HepG2 (cell line): ENCODE measurements at regions of chr7 and their contacts with region 1.

Region 1: DNA sequence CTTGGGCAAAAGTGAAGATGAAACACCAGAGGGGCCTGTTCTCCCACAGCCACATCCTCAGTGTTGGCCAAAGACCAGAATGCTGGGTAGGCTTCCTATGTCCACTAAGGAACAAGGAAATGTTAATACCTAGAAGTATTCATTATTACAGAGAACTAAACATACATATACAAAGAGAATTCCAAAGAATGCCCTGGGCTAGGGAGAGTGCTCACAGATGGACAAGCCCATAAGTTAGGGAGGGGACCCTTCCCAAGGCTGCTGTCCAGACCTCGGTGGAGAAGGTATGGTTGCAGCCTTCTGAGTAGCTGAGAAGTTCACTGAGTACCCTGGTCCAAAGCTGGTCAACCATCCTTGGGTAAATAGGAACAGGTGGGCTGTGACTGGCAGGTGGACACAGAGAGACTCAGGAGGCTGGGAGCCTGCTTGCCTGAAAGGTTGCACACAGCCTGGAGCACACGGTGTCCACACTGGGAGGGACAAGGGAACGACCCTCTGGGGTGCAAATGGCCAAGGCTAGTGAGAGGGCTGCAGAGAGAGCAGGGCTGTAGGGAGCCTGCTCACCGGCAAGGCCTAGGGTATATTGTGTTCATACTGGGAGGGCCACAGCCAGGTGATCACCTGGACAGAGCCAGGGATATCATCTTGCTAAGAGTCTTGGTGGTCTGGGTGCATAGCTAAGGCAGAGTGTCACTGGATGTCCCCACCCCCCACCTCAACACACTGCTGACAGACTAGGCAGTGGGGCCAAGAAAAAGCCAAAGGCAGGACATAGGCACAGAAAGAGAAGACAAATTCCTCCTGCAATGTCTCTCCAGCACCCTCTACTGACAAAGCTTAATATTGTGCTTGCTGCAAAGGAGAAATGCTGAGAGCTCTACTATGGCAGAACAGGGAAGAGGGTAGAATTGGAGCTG is 40.3 kb downstream of the CPVL start:
- DNase-seq: peak; percentile 56
- ATAC-seq: peak; percentile 93
- H3K4me3 ChIP-seq: no peak overlapping the region
- H3K27ac ChIP-seq: no peak overlapping the region
- H3K4me1 ChIP-seq: peaks cover 18% of the 10 kb centered on the region
- H3K27me3 ChIP-seq: no peaks in the 10 kb centered on the region
- CTCF ChIP-seq: peak; percentile 90
- EP300 ChIP-seq: no peak
- POLR2A ChIP-seq: no peak
- RAD21 ChIP-seq: peak; percentile 71

Region 2: GRCh38 chr7:28926871-28927597 is 179.0 kb before region 1 on chr7:
- CTCF ChIA-PET with region 1: interaction called, 57 read pairs
- POLR2A ChIA-PET with region 1: interaction called, 7 read pairs
- in situ Hi-C with region 1: loop called (anchors 5 kb)
- intact Hi-C with region 1: loop called (anchors 1 kb)
- DNase-seq: peak; percentile 78
- ATAC-seq: peak; percentile 88
- H3K4me3 ChIP-seq: peak overlapping the region; percentile 60 to 72 (median 63)
- H3K27ac ChIP-seq: no peak overlapping the region
- H3K4me1 ChIP-seq: peaks cover 31% of the 10 kb centered on the region
- H3K27me3 ChIP-seq: no peaks in the 10 kb centered on the region
- CTCF ChIP-seq: peak; percentile 87
- EP300 ChIP-seq: no peak
- POLR2A ChIP-seq: no peak; a peak in 1 of 4 replicates
- RAD21 ChIP-seq: peak; percentile 57; the same call in 1 of the 2 replicates